Esophagus muscularis mucosa (tissue), 4 donors: ENCODE measurements at regions of chr2 and their contacts with region 1.

Region 1: GRCh38 chr2:177489719-177490301 is 97.2 kb downstream of the AGPS start:
- DNase-seq: no peak
- H3K4me3 ChIP-seq: no peak overlapping the region
- H3K27ac ChIP-seq: no peak overlapping the region
- H3K4me1 ChIP-seq: no peaks in the 10 kb centered on the region
- H3K27me3 ChIP-seq: no peaks in the 10 kb centered on the region
- CTCF ChIP-seq: peak; percentile 24 to 55 (median 54)
- EP300 ChIP-seq: no peak
- POLR2A ChIP-seq: no peak

Region 2: GRCh38 chr2:177187631-177188312 is 302.0 kb before region 1 on chr2:
- intact Hi-C with region 1: no loop called
- DNase-seq: no peak
- H3K4me3 ChIP-seq: no peak overlapping the region
- H3K27ac ChIP-seq: no peak overlapping the region
- H3K4me1 ChIP-seq: peaks cover 0 to 32% (median 12%) of the 10 kb centered on the region in 4 donors
- H3K27me3 ChIP-seq: no peaks in the 10 kb centered on the region
- CTCF ChIP-seq: no peak
- EP300 ChIP-seq: no peak
- POLR2A ChIP-seq: no peak

Region 3: DNA sequence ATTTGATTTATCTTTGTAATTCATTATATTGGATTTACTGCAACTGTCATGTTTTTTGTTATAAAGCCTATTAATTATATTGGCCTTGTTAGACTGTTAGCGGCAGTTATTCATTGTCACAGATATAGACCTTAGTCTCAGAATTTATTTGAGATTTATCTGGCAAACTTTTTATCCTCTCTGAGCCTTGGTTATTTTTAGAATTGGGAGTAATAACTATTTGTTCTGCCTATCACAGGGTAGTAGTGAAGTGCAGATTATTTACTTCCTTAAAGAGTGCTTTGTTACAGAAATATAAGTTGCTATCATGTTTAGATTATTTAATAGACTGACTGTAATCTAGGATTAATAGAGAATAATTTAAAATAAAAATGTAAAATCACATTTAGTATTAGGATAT is 55.3 kb before region 1 on chr2:
- intact Hi-C with region 1: no loop called
- DNase-seq: no peak
- H3K4me3 ChIP-seq: no peak overlapping the region
- H3K27ac ChIP-seq: no peak overlapping the region
- H3K4me1 ChIP-seq: no peaks in the 10 kb centered on the region
- H3K27me3 ChIP-seq: no peaks in the 10 kb centered on the region
- CTCF ChIP-seq: no peak
- EP300 ChIP-seq: no peak
- POLR2A ChIP-seq: no peak

Region 4: DNA sequence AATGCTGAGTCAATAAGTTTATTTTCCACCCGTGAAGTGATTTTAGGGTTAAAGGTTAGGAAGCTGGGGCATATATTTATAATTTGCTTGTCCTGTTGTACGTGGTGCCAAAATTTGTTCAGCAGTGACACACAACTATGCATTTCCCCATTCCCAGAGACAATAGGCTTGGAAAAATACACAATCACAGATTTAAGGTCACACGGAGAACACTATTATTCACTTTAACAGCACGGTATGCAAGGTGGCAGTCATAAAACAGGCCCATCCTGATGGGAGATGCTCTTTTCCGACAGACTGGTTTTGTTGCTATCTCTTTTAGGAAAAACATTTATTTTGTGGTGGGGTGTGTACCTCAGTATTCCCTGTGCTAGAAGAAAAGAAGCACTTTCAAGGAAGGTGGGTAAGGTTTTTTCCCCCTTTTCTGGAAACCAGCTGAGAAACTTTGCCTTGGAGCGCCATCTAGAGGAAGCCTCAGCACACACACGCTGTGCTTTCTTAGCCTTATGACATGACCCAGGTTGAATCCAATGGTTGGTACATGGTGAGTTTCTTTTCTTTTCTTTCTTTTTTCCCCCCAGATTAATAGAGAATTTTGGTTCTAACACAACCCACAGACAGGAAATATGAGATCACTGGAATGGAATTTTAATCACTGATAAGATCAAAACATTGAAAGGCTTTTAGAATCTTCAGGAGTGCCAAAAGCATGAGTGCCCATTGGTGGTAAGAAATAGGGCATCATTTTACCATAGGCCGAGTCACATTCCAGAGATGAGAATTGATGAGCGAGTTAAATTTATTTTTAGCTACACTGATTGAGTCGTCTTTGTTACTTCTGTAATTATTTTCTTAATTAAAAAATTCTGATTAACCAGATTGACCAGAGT is 234.8 kb after region 1 on chr2:
- intact Hi-C with region 1: loop called (anchors 10 kb)
- DNase-seq: no peak
- H3K4me3 ChIP-seq: no peak overlapping the region
- H3K27ac ChIP-seq: no peak overlapping the region
- H3K4me1 ChIP-seq: peaks cover 0 to 7% (median 0%) of the 10 kb centered on the region in 4 donors
- H3K27me3 ChIP-seq: no peaks in the 10 kb centered on the region
- CTCF ChIP-seq: peak; percentile 71 to 84 (median 73)
- EP300 ChIP-seq: no peak
- POLR2A ChIP-seq: no peak

Region 5: GRCh38 chr2:177906041-177906718 is 416.4 kb after region 1 on chr2:
- intact Hi-C with region 1: no loop called
- DNase-seq: no peak
- H3K4me3 ChIP-seq: no peak overlapping the region
- H3K27ac ChIP-seq: no peak overlapping the region
- H3K4me1 ChIP-seq: peaks cover 0 to 7% (median 0%) of the 10 kb centered on the region in 4 donors
- H3K27me3 ChIP-seq: no peaks in the 10 kb centered on the region
- CTCF ChIP-seq: peak; percentile 46 to 69 (median 46)
- EP300 ChIP-seq: no peak
- POLR2A ChIP-seq: no peak